ENCODE measurements at regions of chr1 and their contacts with region 1.

Region 1: GRCh38 chr1:200669314-200670241 is at the start of gene DDX59:
- DNase-seq: peak; percentile 97
- ATAC-seq: peak; percentile 97
- total RNA-seq, gene DDX59: 12.9 TPM

Region 2: GRCh38 chr1:200738740-200739498 is 69.3 kb after region 1 on chr1 and contains the start of gene CAMSAP2:
- intact Hi-C with region 1: loop called (anchors 5 kb)
- DNase-seq: peak; percentile 93
- ATAC-seq: peak; percentile 91
- total RNA-seq, gene CAMSAP2: 37.5 TPM